Mammary epithelial cell (primary cell): ENCODE measurements at regions of chr5 and their contacts with region 1.

Region 1: DNA sequence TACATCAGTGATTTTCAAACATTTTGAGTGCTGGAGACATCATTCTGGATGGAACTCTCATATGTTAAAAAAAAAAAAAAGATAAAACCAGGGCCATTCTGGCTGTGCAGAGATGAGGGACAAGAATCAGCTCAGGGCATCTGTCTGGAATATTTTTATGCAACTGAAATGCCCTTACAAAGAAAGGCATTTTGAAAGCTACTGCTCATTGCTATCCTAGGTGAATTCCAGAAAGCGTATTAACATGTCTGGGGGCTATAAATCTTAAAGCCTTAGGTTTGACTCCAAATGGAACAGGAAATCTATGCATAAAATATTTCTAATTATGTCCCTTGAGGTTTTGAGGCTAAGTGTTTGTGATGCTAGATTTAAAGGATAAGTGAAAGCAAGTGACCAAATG is 14.9 kb upstream of the PCSK1 start:
- DNase-seq: no peak
- H3K4me3 ChIP-seq: no peak overlapping the region
- H3K27ac ChIP-seq: no peak overlapping the region
- H3K4me1 ChIP-seq: no peaks in the 10 kb centered on the region
- H3K27me3 ChIP-seq: peaks cover 2% of the 10 kb centered on the region
- CTCF ChIP-seq: no peak

Region 2: GRCh38 chr5:96492654-96493053 is 44.7 kb after region 1 on chr5:
- CTCF ChIA-PET with region 1: no interaction called
- dilution Hi-C with region 1: loop called (anchors 5 kb)
- in situ Hi-C with region 1: no loop called
- intact Hi-C with region 1: no loop called
- DNase-seq: peak; percentile 36
- H3K4me3 ChIP-seq: no peak overlapping the region
- H3K27ac ChIP-seq: no peak overlapping the region
- H3K4me1 ChIP-seq: no peaks in the 10 kb centered on the region
- H3K27me3 ChIP-seq: no peaks in the 10 kb centered on the region
- CTCF ChIP-seq: no peak